ENCODE measurements at regions of chr6 and their contacts with region 1.

Region 1: DNA sequence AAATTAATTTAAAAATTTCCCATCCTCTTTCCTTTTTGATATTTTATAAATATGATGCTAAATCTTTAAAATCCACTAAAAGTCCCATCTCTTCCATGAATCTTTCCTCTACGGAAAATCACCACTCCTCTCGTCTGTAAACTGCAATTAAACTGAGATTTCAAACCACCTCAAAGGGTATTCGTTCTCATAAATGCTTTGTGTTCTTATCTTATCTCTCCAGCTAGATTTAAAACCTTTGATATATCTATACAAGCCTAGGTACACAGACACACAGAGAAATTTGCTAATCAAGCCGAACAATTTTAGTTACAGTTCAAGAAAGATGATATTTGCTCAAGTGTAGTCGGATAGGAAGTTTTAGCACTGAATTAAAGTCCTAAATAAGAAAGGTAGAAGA is 214.6 kb upstream of the PRDM1 start:
- DNase-seq: no peak

Region 2: DNA sequence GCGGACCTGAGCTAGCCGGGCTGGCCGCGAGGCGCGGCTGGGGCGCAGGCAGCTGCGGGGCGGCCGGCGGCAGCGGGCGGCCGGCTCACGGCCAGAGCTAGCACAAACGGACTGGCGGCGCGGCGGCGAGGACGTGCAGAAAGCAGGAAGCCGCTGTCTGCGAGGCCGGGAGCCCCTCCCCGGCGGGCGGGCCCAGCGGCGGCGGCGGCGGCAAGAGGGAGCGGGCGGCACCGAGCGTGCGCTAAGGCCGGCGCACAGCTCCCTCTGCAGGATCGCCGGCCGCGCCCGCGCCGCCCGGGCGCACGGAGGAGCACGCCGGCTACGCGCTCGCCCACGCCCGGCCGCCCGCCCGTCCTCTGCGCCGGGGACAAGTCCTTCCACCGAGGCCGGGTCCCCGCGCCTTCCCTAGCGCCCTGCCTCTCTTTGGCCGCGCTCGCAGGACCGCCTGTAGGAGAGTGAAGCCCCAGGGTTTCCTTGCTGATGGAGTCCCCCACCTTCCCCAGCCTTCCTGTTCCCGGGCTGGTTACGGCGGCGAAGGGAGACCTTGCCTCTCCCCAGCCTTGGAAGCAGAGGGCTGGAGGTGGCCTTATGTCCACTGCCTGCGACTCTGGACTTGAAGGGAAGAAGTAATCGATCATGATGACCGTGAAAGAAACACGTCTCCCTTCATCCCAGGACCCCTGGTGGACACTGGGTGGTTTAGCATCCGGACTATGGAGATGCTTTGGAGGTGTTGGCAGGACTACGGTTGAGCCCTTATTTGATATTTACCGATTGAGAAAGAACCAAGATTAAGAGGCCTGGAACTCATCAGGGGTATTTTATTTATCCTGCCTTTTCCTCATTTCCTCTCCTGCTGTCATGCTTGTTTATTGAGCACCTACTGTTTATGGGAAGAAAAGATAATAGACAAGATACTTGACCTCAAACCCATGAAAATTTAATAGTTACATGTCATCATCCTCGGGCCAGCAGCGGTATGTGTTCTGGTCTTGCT is 468.3 kb before region 1 on chr6 and contains the start of gene PREP:
- intact Hi-C with region 1: no loop called
- DNase-seq: peak; percentile 97
- total RNA-seq, gene PREP: 20.5 to 21.2 TPM

Region 3: DNA sequence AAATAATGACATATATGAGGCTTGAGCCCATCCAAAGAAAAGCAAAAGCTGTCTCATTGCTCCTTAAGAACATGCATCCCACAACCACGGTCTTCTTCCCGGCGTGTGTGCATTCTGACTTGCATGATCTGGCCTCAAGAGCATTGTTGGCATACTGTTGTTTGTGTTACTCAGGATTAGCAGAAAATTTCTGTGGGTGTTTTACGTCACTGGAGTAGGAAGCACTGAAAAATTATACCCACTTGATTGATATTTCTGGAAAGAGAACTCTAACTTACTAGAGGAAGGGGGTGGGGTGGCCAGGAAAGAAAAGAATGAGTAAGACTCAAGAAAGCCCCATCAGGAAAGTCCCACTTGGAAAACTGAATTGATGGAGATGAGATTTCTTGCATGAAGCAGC is 111.6 kb before region 1 on chr6:
- intact Hi-C with region 1: no loop called
- DNase-seq: no peak

Region 4: DNA sequence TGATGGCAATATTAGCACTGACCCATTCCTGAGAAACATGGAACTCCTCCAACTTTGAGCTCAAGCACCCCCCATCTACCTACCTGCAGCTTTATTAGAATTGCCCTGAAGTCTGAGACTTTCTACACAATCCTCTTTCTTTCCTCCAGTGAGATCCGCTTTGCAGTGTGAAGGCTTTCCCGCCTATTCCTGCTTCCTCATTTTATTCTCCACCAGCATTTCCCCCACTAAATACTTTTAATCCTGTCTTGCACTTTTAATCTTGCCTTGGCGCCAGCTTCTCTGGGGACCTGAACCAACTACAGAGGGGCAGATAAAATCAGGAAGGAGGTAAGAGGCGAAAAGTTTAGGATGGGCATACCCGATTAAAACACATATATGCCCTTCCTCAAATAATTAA is 36.4 kb after region 1 on chr6:
- intact Hi-C with region 1: loop called in 1 of 2 experiments (anchors 1 kb)
- DNase-seq: no peak